Endothelial cell of umbilical vein (primary cell): ENCODE measurements at regions of chr15 and their contacts with region 1.

Region 1: GRCh38 chr15:92521624-92522008 is 127.9 kb downstream of the ST8SIA2 start:
- DNase-seq: peak; percentile 89
- H3K4me3 ChIP-seq: no peak overlapping the region
- H3K27ac ChIP-seq: no peak overlapping the region
- H3K4me1 ChIP-seq: peaks cover 6% of the 10 kb centered on the region
- H3K27me3 ChIP-seq: no peaks in the 10 kb centered on the region
- CTCF ChIP-seq: peak; percentile 72
- POLR2A ChIP-seq: no peak

Region 2: DNA sequence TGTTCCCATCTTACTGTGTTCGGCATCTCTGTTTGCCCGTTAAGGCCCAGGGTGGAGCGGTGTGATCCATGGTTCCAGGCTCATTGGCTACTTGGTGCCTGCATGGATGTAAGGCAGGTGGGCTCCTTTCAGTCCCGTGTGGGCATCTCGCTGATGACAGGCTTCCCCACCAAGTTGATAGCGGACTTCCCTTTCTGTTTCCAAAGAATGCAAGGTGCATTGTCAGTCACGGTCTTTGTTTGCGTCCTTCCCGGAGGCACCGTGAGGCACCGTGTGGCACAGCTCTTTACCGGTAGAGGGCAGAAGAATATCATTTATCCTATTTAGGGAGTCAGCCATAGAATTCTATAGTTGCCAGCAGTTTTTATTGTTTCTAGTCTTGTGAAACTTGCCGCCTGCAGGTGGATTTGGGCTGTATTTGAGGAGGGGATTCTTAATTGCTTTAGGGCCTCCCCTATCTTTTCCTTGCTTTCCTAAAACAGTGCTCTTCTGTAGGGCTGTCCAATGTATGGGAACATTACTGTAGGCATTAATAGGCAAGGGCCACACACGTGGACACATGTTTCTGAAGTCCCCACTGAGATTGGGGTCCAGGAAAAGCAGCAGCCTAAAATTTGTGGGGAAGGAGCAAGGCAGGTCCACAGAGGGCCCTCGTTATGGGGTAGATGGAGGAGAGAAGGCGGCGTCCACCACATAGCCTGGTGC is 424.0 kb before region 1 on chr15:
- CTCF ChIA-PET with region 1: interaction called, 10 read pairs
- POLR2A ChIA-PET with region 1: no interaction called
- dilution Hi-C with region 1: no loop called
- intact Hi-C with region 1: loop called (anchors 2 kb)
- DNase-seq: peak; percentile 57
- H3K4me3 ChIP-seq: no peak overlapping the region
- H3K27ac ChIP-seq: no peak overlapping the region
- H3K4me1 ChIP-seq: no peaks in the 10 kb centered on the region
- H3K27me3 ChIP-seq: no peaks in the 10 kb centered on the region
- CTCF ChIP-seq: peak; percentile 68
- POLR2A ChIP-seq: no peak

Region 3: GRCh38 chr15:92226014-92226612 is 295.5 kb before region 1 on chr15:
- CTCF ChIA-PET with region 1: no interaction called
- POLR2A ChIA-PET with region 1: no interaction called
- dilution Hi-C with region 1: no loop called
- intact Hi-C with region 1: no loop called
- DNase-seq: no peak
- H3K4me3 ChIP-seq: no peak overlapping the region
- H3K27ac ChIP-seq: no peak overlapping the region
- H3K4me1 ChIP-seq: no peaks in the 10 kb centered on the region
- H3K27me3 ChIP-seq: no peaks in the 10 kb centered on the region
- CTCF ChIP-seq: no peak
- POLR2A ChIP-seq: no peak

Region 4: DNA sequence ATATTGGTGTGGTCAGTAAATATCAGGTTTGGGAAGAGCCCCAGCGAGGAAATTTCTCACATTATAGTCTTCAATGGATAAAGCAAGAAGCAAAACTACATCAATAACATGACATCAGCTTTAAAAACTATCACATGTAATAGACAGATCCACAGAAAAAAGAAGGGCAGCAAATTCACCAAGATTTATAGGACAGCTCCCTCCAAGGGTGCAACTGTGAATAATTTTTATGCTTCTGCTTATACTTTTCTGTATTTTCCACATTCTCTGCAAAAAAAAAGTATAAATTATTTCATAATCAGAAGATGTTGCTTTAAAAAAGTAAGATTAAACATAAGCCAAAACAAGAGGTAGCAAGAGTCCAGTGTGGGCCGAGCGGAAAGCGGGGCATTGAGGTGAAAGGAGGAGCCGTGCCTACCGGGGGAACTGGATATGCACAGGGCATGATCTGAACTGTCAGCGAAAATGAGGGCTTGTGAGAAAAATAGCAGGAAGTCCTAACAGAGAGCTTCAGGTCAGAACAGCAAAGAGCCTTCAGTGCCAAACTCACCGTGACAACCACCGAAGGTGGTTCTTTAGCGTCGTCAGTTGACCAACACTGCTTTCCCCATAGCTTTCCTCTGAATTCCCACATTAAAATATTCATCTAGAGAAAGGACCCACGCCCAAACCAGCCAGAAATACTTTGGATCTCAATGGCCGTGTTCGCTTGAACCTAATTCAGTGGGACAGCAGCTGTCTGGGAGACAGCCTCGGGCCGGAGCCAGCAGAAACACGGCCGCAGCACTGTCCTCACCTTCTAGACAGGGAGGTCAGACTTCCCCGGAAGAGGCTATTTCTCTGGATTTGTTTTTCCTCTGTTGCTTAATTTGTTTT is 74.1 kb after region 1 on chr15:
- CTCF ChIA-PET with region 1: interaction called, 40 read pairs
- POLR2A ChIA-PET with region 1: no interaction called
- dilution Hi-C with region 1: no loop called
- intact Hi-C with region 1: loop called (anchors 2 kb)
- DNase-seq: peak; percentile 8
- H3K4me3 ChIP-seq: no peak overlapping the region
- H3K27ac ChIP-seq: no peak overlapping the region
- H3K4me1 ChIP-seq: no peaks in the 10 kb centered on the region
- H3K27me3 ChIP-seq: peaks cover 0 to 29% of the 10 kb centered on the region in 2 experiments
- CTCF ChIP-seq: no peak
- POLR2A ChIP-seq: no peak

Region 5: DNA sequence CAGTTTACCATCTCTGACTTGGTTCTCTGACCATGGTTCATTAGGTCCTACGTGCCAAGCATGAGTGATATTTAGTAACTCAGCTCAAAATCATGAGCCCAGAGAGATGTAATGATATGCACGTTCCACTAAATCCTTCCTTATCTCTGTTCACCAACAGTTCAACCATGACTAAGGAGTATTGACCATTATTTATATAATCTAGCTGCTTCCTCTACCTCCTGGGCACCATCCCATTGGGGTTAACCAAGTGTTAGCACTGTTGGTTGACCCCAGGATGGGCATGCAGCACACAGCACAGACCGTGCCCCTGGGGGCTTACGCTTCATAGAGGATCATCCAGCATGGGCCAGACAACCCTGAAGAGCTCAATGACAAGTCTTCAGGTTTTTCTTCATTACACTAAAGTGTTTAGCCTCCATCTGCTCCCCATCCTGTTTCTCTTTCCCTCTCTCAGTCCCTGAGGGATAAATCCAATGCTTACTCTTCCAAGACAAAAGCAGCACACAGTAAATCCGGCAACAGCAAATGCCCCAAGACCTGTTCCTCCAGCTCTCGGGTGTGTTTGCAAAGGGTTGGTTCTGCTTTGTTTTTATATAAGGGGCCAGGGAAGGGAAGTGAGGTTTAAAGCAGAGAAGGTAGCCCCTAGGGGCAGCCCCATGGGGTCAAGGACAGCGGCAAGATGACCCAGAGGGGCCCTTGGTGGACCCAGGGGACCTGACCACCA is 123.6 kb after region 1 on chr15:
- CTCF ChIA-PET with region 1: interaction called, 13 read pairs
- POLR2A ChIA-PET with region 1: no interaction called
- dilution Hi-C with region 1: no loop called
- intact Hi-C with region 1: loop called (anchors 1 kb)
- DNase-seq: peak; percentile 87
- H3K4me3 ChIP-seq: no peak overlapping the region
- H3K27ac ChIP-seq: peak overlapping the region; percentile 72
- H3K4me1 ChIP-seq: peaks cover 35% of the 10 kb centered on the region
- H3K27me3 ChIP-seq: no peaks in the 10 kb centered on the region
- CTCF ChIP-seq: no peak
- POLR2A ChIP-seq: peak; percentile 71

Region 6: DNA sequence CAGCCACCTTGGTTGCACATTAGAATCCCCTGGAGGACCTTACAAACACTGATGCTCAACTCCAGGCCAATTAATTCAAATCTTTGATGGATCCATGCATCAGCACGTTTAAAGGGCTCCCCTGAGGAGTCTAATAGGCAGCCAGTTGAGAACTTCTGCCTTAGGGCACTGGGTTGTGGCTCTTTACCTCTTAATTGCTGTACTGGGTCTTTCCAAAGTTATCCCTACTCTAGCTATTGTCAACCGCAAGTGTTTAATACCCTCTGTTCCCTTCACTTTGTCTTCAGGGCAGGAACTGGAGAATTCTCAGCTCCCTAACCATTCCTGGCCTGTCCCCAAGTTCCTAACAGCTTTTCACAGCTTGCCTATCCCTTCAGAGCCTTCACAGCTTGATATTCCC is 149.0 kb after region 1 on chr15:
- CTCF ChIA-PET with region 1: interaction called, 13 read pairs
- POLR2A ChIA-PET with region 1: no interaction called
- dilution Hi-C with region 1: no loop called
- intact Hi-C with region 1: no loop called
- DNase-seq: no peak
- H3K4me3 ChIP-seq: no peak overlapping the region
- H3K27ac ChIP-seq: no peak overlapping the region
- H3K4me1 ChIP-seq: no peaks in the 10 kb centered on the region
- H3K27me3 ChIP-seq: peaks cover 0 to 2% of the 10 kb centered on the region in 2 experiments
- CTCF ChIP-seq: no peak
- POLR2A ChIP-seq: no peak

Region 7: GRCh38 chr15:92693691-92694331 is 172.2 kb after region 1 on chr15:
- CTCF ChIA-PET with region 1: interaction called, 12 read pairs
- POLR2A ChIA-PET with region 1: no interaction called
- dilution Hi-C with region 1: no loop called
- intact Hi-C with region 1: no loop called
- DNase-seq: peak; percentile 69
- H3K4me3 ChIP-seq: no peak overlapping the region
- H3K27ac ChIP-seq: no peak overlapping the region
- H3K4me1 ChIP-seq: peaks cover 2% of the 10 kb centered on the region
- H3K27me3 ChIP-seq: no peaks in the 10 kb centered on the region
- CTCF ChIP-seq: peak; percentile 71 to 75
- POLR2A ChIP-seq: no peak